SK-N-SH (cell line): ENCODE measurements at regions of chr5 and their contacts with region 1.

Region 1: DNA sequence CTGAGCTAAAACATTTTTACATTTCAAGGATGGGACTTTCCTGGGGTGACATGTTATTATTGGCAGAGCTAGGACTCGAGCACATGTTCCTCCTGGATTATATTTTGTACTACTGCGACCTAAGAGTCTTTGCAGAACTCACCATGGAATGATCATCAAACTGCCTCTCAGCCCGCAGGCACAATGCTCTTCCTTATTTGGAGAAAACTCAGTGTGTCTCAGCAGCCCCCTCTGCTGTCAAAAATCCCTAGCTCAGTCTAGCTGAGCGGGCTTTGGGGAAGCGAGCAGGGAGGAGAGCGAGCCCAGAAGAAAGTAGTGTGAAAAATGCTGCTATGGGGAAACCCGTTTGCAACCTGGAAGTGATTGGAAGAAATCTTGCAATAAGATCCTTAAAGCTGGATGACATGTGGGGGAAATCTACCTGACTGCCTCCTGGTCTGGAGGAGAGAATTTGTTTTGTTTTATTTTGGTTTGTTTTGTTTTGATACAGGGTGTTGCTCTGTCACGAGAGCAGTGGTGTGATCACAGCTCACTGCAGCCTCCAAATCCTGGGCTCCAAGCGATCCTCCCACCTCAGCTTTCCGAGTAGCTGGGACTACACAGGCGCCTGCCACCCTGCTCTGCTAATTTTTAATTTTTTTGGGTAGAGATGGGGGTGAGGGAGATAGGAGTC is 89.9 kb upstream of the CLINT1 start:
- DNase-seq: peak; percentile 77
- H3K4me3 ChIP-seq: peak overlapping the region in 1 of 2 experiments; percentile 1; a peak in 1 of 4 replicates
- H3K27ac ChIP-seq: no peak overlapping the region
- H3K4me1 ChIP-seq: no peaks in the 10 kb centered on the region; a peak in 1 of 4 replicates
- H3K27me3 ChIP-seq: no peaks in the 10 kb centered on the region
- CTCF ChIP-seq: peak; percentile 91
- EP300 ChIP-seq: no peak
- RAD21 ChIP-seq: peak; percentile 83

Region 2: GRCh38 chr5:157820593-157821252 is 128.2 kb before region 1 on chr5:
- CTCF ChIA-PET with region 1: interaction called, 22 read pairs
- POLR2A ChIA-PET with region 1: no interaction called
- DNase-seq: peak; percentile 19
- H3K4me3 ChIP-seq: no peak overlapping the region
- H3K27ac ChIP-seq: no peak overlapping the region; a peak in 1 of 4 replicates
- H3K4me1 ChIP-seq: peaks cover 0 to 6% of the 10 kb centered on the region in 2 experiments; a peak in 2 of 4 replicates
- H3K27me3 ChIP-seq: no peaks in the 10 kb centered on the region
- CTCF ChIP-seq: peak; percentile 78
- EP300 ChIP-seq: no peak
- RAD21 ChIP-seq: peak; percentile 60

Region 3: DNA sequence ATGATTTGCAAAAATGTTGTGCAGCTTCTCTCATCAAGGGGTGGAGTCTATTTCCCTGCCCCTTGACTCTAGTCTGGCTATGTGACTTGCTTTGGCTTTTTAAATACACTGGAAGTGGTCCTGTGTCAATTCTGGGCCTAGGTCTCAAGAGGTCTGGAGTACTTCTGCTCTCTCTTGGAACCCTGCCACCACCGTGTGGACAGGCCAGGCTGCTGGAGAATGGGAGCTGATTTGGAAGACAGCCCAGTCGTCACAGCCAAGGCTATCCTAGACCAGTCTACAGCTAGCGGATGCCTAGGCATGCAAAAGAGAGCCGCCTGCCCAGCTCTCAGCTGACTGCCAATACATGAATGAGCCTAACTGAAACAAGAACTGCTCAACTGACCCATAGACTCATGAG is 33.2 kb before region 1 on chr5:
- CTCF ChIA-PET with region 1: interaction called, 17 read pairs
- POLR2A ChIA-PET with region 1: no interaction called
- DNase-seq: peak; percentile 72
- H3K4me3 ChIP-seq: no peak overlapping the region
- H3K27ac ChIP-seq: peak overlapping the region in 1 of 2 experiments; percentile 7; a peak in 1 of 4 replicates
- H3K4me1 ChIP-seq: peaks cover 0 to 25% of the 10 kb centered on the region in 2 experiments; a peak in 2 of 4 replicates
- H3K27me3 ChIP-seq: no peaks in the 10 kb centered on the region
- CTCF ChIP-seq: no peak
- EP300 ChIP-seq: peak in 1 of 2 experiments; percentile 62; a peak in 2 of 4 replicates
- RAD21 ChIP-seq: peak; percentile 63

Region 4: GRCh38 chr5:157961828-157962590 is 13.1 kb after region 1 on chr5:
- CTCF ChIA-PET with region 1: interaction called, 25 read pairs
- POLR2A ChIA-PET with region 1: no interaction called
- DNase-seq: peak; percentile 52
- H3K4me3 ChIP-seq: no peak overlapping the region
- H3K27ac ChIP-seq: peak overlapping the region in 1 of 2 experiments; percentile 88; a peak in 2 of 4 replicates
- H3K4me1 ChIP-seq: peaks cover 0 to 13% of the 10 kb centered on the region in 2 experiments; a peak in 2 of 4 replicates
- H3K27me3 ChIP-seq: no peaks in the 10 kb centered on the region
- CTCF ChIP-seq: no peak
- EP300 ChIP-seq: no peak
- RAD21 ChIP-seq: no peak